IMR-90 (cell line): ENCODE measurements at regions of chr1 and their contacts with region 1.

Region 1: DNA sequence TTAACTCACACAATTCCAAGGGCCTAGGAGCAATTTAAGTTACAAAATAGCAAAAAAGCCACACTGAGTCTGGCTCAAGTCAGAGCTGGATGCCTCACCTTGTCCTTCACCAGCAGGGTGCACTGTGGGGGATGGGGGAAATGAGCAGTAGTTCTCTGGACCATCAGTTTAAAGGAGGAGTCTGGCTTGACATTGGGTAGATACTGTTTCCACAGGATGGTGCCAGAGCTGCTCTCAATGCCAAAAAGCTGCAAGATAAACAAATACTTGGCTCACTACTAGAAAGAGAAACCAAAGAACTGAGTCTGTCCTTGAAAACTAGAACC is 18.8 kb downstream of the EMC1 start:
- DNase-seq: peak; percentile 68
- ATAC-seq: peak; percentile 89
- H3K4me3 ChIP-seq: no peak overlapping the region
- H3K27ac ChIP-seq: no peak overlapping the region; the same call in 1 of the 2 replicates
- H3K4me1 ChIP-seq: peaks cover 11% of the 10 kb centered on the region; the same call in 1 of the 2 replicates
- H3K27me3 ChIP-seq: no peaks in the 10 kb centered on the region
- CTCF ChIP-seq: no peak; the same call in 1 of the 2 replicates
- POLR2A ChIP-seq: no peak
- RAD21 ChIP-seq: peak; percentile 11; the same call in 1 of the 2 replicates

Region 2: GRCh38 chr1:19212167-19212566 is 20.3 kb before region 1 on chr1:
- CTCF ChIA-PET with region 1: no interaction called
- POLR2A ChIA-PET with region 1: interaction called, 4 read pairs
- dilution Hi-C with region 1: no loop called
- in situ Hi-C with region 1: no loop called
- intact Hi-C with region 1: loop called (anchors 1 kb)
- DNase-seq: no peak
- ATAC-seq: no peak
- H3K4me3 ChIP-seq: no peak overlapping the region
- H3K27ac ChIP-seq: no peak overlapping the region
- H3K4me1 ChIP-seq: peaks cover 4% of the 10 kb centered on the region; the same call in 1 of the 2 replicates
- H3K27me3 ChIP-seq: no peaks in the 10 kb centered on the region
- CTCF ChIP-seq: no peak
- POLR2A ChIP-seq: no peak
- RAD21 ChIP-seq: no peak

Region 3: DNA sequence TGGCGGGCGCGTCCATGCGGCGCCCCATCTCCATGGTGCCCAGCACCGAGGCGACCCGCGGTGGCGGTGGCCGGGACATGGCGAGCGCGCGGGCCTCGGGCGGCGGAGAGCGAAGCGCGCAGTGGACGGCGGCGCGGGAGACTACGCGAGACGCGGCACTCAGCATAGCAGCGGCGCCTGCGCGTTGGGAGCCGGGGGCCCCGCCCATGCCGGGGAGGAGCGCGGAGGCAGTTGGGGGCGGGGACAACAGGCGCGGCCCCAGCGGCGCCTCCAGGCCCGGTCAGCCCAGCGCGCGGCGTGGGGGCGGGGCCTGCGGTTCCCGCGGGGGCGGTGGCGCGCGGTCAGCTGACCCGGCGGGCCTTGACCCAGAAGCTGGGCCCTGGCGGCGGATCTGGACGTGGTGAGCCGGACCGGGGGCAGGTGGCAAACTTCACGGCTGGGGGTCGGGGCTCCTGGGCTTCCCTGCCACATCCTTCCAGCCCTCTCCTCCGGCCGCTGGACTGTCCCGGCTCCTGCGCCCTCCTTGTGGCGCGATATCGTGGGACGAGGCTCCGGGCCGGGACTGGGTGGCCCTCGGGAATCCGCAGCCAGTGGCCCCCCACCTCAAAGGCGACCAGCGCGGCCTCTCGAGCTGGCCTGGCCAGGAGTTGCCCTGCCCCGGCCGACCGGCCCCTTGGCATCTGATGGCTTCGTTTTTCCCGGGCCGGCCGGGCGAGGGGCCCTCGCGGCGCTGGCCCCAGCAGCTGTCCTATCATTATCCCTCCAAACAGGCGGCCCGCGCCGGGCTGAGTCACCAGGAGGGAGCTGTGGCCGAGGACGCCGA is 79.7 kb after region 1 on chr1 and contains the starts of genes AKR7A2 and SLC66A1:
- CTCF ChIA-PET with region 1: no interaction called
- POLR2A ChIA-PET with region 1: no interaction called
- dilution Hi-C with region 1: no loop called
- in situ Hi-C with region 1: no loop called
- intact Hi-C with region 1: no loop called
- DNase-seq: peak; percentile 89
- ATAC-seq: peak; percentile 93
- H3K4me3 ChIP-seq: peak within 1 kb of the TSS; percentile 96
- H3K27ac ChIP-seq: peak within 1 kb of the TSS; percentile 87
- H3K4me1 ChIP-seq: peaks cover 27% of the 10 kb centered on the region
- H3K27me3 ChIP-seq: no peaks in the 10 kb centered on the region
- CTCF ChIP-seq: no peak
- POLR2A ChIP-seq: peak; percentile 81
- RAD21 ChIP-seq: no peak
- total RNA-seq, gene AKR7A2: 50.5 and 60.2 TPM in 2 replicates
- total RNA-seq, gene SLC66A1: 6.8 and 7.5 TPM in 2 replicates